Heart right ventricle (tissue), 16 donors: ENCODE measurements at regions of chr4 and their contacts with region 1.

Region 1: DNA sequence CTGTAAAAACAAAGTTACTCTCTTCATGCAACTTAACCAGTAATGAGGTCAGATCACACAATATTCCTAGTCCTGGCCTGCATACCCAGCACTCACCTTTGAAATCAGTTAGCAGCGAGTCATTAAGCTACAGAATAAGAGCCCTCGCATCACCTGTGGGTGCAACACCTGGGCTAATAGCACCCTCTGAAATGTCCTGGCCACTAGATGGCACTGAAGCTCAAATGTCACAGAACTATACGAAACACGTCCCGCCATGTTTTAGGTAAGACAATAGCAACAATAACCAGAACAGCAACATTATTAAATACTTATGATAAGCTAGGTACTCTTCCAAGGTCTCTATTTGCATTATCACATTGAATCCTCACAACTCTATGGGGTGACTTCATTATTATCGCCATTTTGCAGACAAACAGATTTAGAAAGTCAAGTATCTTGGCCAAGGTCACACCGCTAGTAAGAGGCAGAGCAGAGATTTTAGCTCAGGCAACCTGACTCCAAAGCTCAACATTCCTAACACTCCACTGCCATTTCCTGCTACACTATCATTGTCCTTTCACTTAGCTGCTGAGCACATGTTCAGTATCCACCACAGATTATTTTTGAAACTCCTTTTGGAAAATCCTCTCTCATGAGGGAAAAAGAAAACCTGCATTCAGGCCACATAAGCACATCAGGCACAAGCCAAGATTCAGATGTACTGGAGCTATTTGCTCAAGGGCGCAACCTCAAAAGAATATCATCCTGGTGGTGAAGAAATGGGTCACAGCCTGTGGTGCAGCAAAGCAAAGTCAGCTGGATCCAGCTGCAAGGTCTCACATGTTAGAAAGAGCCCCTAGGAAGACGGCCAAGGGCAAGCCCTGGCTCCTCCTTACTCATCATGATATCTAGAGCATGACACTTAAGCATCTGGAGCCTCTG is 59.5 kb upstream of the KDR start:
- DNase-seq: no peak
- ATAC-seq: peak in 7 of 8 donors; percentile 22 to 65 (median 57)
- H3K4me3 ChIP-seq: no peak overlapping the region
- H3K27ac ChIP-seq: peak overlapping the region in 5 of 10 donors; percentile 3 to 68 (median 15)
- H3K4me1 ChIP-seq: peaks cover 0 to 60% (median 36%) of the 10 kb centered on the region in 9 donors
- H3K27me3 ChIP-seq: no peaks in the 10 kb centered on the region
- CTCF ChIP-seq: peak in 6 of 9 donors; percentile 17 to 47 (median 34)

Region 2: DNA sequence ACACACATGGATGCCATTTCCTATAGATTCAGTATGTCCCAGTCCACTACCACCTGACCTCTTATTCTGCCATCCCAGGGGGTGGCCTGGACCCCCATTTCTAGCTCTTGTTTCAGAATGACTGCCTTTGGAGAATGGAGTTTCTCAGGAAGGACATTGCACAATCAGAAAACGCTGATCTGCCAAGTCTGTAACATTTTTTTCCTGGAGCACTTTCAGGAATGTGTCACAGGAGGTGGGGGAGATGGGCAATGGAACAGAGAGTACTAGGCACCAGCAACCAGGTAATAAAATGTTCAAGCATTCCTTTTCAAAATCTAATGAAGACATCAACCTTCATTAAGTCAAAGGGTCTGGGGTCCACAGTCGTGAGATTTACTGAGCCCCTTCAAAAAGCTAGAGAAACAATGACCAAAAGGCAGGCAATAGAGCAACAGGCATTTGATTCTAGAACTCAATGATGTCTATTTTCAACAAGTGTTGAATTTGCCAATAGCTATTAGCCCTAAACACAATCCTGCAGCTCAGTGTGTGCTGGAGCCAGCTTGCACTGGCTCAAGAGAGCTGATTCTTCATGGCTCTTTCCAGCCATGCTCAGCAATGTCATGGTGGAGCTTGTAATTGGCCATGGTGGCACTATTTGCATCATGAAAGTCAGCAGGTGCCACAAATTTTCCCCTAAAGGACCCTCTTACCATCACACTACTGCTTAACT is 146.5 kb before region 1 on chr4:
- intact Hi-C with region 1: no loop called
- DNase-seq: peak; percentile 18 to 59
- ATAC-seq: peak; percentile 76 to 96 (median 91)
- H3K4me3 ChIP-seq: no peak overlapping the region
- H3K27ac ChIP-seq: peak overlapping the region; percentile 8 to 86 (median 70)
- H3K4me1 ChIP-seq: peaks cover 0 to 41% (median 20%) of the 10 kb centered on the region in 9 donors
- H3K27me3 ChIP-seq: no peaks in the 10 kb centered on the region
- CTCF ChIP-seq: no peak

Region 3: DNA sequence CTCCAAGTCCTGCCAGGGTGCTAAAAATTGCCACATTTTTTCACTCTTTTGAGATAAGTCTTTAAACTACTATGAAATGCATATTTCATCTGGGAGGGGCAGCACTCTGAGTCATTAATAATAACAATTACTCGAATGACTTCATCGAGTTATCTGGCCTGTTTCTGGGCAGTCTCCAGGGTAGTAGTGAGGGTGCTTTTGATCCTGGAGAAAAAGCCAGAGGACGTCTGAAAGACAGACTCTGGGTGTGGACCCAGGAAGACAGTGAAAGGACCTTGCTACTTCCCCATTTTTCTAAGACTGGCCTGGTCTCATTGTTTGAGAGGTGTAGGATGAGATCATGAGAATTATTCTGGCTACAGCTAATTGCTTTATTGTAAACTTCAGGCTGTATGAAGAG is 119.0 kb after region 1 on chr4:
- intact Hi-C with region 1: loop called in 1 of 10 experiments (anchors 2 kb)
- DNase-seq: peak in 1 of 2 donors; percentile 10
- ATAC-seq: peak; percentile 55 to 97 (median 85)
- H3K4me3 ChIP-seq: no peak overlapping the region
- H3K27ac ChIP-seq: peak overlapping the region in 3 of 10 donors; percentile 4 to 56 (median 12)
- H3K4me1 ChIP-seq: peaks cover 0 to 11% (median 4%) of the 10 kb centered on the region in 9 donors
- H3K27me3 ChIP-seq: no peaks in the 10 kb centered on the region
- CTCF ChIP-seq: no peak

Region 4: DNA sequence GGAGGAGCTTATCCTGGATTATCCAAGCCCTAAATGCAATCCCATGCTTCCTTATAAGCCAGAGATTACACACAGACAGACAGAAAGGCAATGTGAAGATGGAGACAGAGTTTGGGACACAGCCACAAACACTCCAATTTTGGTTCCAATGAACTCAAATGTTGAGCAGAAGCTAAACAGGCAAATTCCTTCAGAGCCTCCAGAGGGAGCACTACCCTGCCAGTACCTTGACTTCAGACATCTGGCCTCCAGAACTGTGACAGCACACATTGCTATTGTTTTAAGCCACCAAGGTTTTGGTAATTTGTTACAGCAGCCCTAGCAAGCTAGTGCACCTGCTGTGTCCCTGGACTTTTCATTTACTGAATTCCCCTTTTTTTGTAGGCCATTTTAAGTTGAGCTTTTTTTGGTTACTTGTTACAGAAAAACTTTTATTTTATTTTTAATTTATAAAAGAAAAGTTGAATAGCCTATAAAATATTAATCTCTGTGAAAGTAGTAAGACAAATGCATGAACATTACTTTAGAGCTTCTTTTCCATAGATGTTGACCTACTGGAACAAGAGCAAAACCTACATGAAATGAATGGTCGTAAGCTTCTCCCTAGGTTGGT is 127.7 kb after region 1 on chr4:
- intact Hi-C with region 1: loop called in 3 of 10 experiments (anchors 5 to 10 kb)
- DNase-seq: peak in 1 of 2 donors; percentile 59
- ATAC-seq: peak; percentile 22 to 89 (median 84)
- H3K4me3 ChIP-seq: no peak overlapping the region
- H3K27ac ChIP-seq: peak overlapping the region in 5 of 10 donors; percentile 4 to 38 (median 12)
- H3K4me1 ChIP-seq: peaks cover 0 to 13% (median 0%) of the 10 kb centered on the region in 9 donors
- H3K27me3 ChIP-seq: no peaks in the 10 kb centered on the region
- CTCF ChIP-seq: peak; percentile 23 to 80 (median 67)

Region 5: DNA sequence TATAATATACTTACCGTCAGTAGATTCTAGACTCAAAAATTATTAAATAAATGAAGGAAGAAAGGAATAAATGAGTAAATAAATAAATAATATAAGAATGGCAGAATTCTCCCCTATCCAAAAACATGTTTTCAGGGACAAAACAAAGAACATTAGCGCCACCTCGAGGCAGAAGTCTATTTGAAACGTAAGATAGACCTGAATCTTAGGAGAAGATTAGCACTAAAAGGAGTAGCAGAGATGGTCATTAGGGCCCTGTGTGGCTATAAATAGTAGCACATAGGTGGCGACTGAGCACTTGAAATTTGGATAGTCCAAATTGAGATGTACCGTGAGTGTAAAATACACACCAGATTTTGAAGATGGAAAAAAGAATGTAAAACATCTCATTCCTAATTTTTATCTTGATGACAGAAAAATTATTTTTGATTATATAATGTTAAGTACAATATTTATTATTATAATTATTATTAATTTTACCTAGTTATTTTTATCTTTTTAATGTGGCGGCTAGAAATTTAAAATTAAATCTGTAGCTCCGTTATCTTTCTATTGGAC is 136.9 kb after region 1 on chr4:
- intact Hi-C with region 1: loop called in 3 of 10 experiments (anchors 10 kb)
- DNase-seq: peak in 1 of 2 donors; percentile 88
- ATAC-seq: peak in 6 of 8 donors; percentile 17 to 69 (median 52)
- H3K4me3 ChIP-seq: no peak overlapping the region
- H3K27ac ChIP-seq: no peak overlapping the region
- H3K4me1 ChIP-seq: peaks cover 0 to 27% (median 13%) of the 10 kb centered on the region in 9 donors
- H3K27me3 ChIP-seq: no peaks in the 10 kb centered on the region
- CTCF ChIP-seq: peak; percentile 44 to 84 (median 68)